Ovary (tissue), 10 donors: ENCODE measurements at regions of chr6 and their contacts with region 1.

Region 1: DNA sequence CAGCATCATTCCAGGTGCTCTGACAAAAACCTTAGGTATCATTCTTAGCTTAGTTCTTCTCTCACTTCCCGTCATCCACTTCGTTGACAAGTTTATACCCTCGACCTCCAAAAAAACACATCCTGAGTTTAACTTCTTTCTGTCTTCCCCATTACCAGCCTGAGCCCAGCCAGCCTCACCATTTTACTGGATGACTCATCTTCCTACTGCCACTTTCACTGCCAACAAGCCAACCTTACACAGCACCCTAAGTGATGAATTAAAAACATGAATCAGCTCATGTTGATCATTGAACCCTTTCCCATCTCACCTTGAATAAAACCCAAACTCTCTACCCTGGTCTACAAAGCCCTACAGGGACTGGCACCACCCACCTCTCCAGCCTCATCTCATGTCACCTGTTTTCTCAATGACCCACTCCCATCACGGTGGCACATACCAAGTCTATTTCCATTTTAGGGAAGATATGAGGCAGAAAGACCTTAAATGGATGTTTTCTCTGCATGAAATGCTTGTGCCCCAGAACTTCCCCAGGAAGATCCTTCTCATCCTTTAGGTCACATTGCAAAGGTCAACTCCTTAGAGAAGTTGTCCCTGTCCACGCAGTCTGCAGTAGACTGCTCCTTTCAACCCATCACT is 9.9 kb upstream of the UST start:
- DNase-seq: no peak
- H3K4me3 ChIP-seq: no peak overlapping the region
- H3K27ac ChIP-seq: no peak overlapping the region
- H3K4me1 ChIP-seq: peaks cover 5% of the 10 kb centered on the region
- H3K27me3 ChIP-seq: no peaks in the 10 kb centered on the region
- CTCF ChIP-seq: no peak
- EP300 ChIP-seq: no peak
- POLR2A ChIP-seq: no peak

Region 2: GRCh38 chr6:147043994-147044477 is 1692.9 kb before region 1 on chr6:
- intact Hi-C with region 1: loop called in 1 of 4 experiments (anchors 10 kb)
- DNase-seq: no peak
- H3K4me3 ChIP-seq: no peak overlapping the region
- H3K27ac ChIP-seq: no peak overlapping the region
- H3K4me1 ChIP-seq: no peaks in the 10 kb centered on the region
- H3K27me3 ChIP-seq: no peaks in the 10 kb centered on the region
- CTCF ChIP-seq: no peak
- EP300 ChIP-seq: no peak
- POLR2A ChIP-seq: no peak

Region 3: DNA sequence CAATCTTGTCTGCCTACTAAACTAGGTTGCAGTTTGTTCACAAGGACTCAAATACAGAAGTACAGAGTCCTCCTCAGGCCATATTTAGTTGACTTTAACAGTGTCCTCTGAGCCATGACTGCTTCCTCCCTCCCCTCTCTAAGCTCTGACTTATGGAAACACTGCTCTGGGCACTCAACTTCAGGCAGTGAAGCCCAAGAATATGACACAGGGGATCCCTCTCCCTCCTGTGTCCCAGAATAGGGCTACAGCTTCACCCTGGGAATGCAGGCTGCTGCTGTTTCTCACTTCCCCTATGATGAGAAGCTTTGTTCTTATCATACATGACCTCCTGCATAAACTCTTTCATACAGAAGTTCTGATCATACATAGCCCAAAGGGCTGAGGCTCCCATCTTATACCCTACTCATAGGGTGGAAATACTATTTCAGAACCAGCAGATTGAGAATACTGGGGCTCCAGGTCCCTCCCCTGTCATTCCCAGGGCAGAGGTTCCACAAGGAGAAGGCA is 87.4 kb before region 1 on chr6:
- intact Hi-C with region 1: no loop called
- DNase-seq: no peak
- H3K4me3 ChIP-seq: no peak overlapping the region
- H3K27ac ChIP-seq: no peak overlapping the region
- H3K4me1 ChIP-seq: no peaks in the 10 kb centered on the region
- H3K27me3 ChIP-seq: no peaks in the 10 kb centered on the region
- CTCF ChIP-seq: no peak
- EP300 ChIP-seq: no peak
- POLR2A ChIP-seq: no peak

Region 4: GRCh38 chr6:149454386-149454848 is 717.5 kb after region 1 on chr6:
- intact Hi-C with region 1: no loop called
- DNase-seq: peak; percentile 95 to 99 (median 97)
- H3K4me3 ChIP-seq: no peak overlapping the region
- H3K27ac ChIP-seq: peak overlapping the region in 1 of 2 donors; percentile 17
- H3K4me1 ChIP-seq: peaks cover 12% of the 10 kb centered on the region
- H3K27me3 ChIP-seq: no peaks in the 10 kb centered on the region
- CTCF ChIP-seq: no peak
- EP300 ChIP-seq: no peak
- POLR2A ChIP-seq: no peak